GM10248 (cell line): ENCODE measurements at regions of chr6 and their contacts with region 1.

Region 1: GRCh38 chr6:111737065-111737521 is 131.4 kb upstream of the TRAF3IP2 start:
- DNase-seq: no peak
- CTCF ChIP-seq: no peak

Region 2: GRCh38 chr6:111721753-111722154 is 15.3 kb before region 1 on chr6:
- CTCF ChIA-PET with region 1: interaction called, 27 read pairs
- POLR2A ChIA-PET with region 1: no interaction called
- DNase-seq: peak; percentile 48
- CTCF ChIP-seq: peak; percentile 46